ENCODE measurements at regions of chr2 and their contacts with region 1.

Region 1: GRCh38 chr2:159615140-159615951 is 1.0 kb downstream of the BAZ2B start:
- DNase-seq: peak; percentile 92 to 95
- ATAC-seq: peak; percentile 90 to 96 (median 93)
- H3K4me3 ChIP-seq: peak overlapping the region; percentile 83
- H3K27ac ChIP-seq: peak overlapping the region; percentile 92
- H3K4me1 ChIP-seq: peaks cover 31% of the 10 kb centered on the region
- H3K27me3 ChIP-seq: no peaks in the 10 kb centered on the region
- CTCF ChIP-seq: no peak

Region 2: DNA sequence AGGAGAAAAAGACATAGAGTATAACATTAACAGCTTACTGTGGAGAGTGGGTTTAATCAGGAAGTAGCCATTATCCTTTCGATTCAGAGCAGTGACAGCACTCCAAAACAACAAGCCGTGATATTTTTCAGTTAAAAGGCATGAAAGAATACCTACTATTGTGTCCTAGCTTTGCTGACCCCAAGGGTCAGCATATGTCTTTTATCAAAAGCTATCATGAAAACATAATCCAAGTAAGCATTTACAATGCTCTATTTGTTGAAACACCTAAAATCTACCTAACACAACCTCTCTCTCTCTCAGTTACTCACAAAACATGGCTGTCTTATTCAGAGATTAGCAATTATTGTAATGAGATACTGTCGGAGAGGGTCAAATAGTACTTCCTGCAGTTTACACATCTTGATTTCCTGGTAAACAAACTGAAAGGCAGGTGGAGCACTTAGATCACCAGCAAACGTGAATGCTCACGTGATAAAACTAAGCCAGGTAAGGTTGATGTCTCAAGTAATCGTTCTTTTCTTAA is 99.0 kb before region 1 on chr2:
- intact Hi-C with region 1: loop called (anchors 5 kb)
- DNase-seq: no peak
- ATAC-seq: peak; percentile 85 to 92 (median 88)
- H3K4me3 ChIP-seq: peak overlapping the region; percentile 66
- H3K27ac ChIP-seq: peak overlapping the region; percentile 66
- H3K4me1 ChIP-seq: peaks cover 21% of the 10 kb centered on the region
- H3K27me3 ChIP-seq: no peaks in the 10 kb centered on the region
- CTCF ChIP-seq: no peak

Region 3: GRCh38 chr2:159712143-159712928 is 97.0 kb after region 1 on chr2 and contains the start of gene MARCHF7:
- intact Hi-C with region 1: loop called (anchors 1 to 2 kb)
- DNase-seq: peak; percentile 98 to 99
- ATAC-seq: peak; percentile 96 to 97 (median 96)
- H3K4me3 ChIP-seq: peak within 1 kb of the TSS; percentile 87
- H3K27ac ChIP-seq: peak within 1 kb of the TSS; percentile 98
- H3K4me1 ChIP-seq: peaks cover 39% of the 10 kb centered on the region
- H3K27me3 ChIP-seq: no peaks in the 10 kb centered on the region
- CTCF ChIP-seq: peak; percentile 57
- total RNA-seq, gene MARCHF7: 72.6 to 104 (median 89.0) TPM

Measured in psoas muscle (tissue), 8 donors.